Left cardiac atrium (tissue), 4 donors: ENCODE measurements at regions of chr16 and their contacts with region 1.

Region 1: GRCh38 chr16:57519796-57520360 is 16.5 kb downstream of the CCDC102A start:
- DNase-seq: peak; percentile 84
- ATAC-seq: peak; percentile 82 to 84

Region 2: DNA sequence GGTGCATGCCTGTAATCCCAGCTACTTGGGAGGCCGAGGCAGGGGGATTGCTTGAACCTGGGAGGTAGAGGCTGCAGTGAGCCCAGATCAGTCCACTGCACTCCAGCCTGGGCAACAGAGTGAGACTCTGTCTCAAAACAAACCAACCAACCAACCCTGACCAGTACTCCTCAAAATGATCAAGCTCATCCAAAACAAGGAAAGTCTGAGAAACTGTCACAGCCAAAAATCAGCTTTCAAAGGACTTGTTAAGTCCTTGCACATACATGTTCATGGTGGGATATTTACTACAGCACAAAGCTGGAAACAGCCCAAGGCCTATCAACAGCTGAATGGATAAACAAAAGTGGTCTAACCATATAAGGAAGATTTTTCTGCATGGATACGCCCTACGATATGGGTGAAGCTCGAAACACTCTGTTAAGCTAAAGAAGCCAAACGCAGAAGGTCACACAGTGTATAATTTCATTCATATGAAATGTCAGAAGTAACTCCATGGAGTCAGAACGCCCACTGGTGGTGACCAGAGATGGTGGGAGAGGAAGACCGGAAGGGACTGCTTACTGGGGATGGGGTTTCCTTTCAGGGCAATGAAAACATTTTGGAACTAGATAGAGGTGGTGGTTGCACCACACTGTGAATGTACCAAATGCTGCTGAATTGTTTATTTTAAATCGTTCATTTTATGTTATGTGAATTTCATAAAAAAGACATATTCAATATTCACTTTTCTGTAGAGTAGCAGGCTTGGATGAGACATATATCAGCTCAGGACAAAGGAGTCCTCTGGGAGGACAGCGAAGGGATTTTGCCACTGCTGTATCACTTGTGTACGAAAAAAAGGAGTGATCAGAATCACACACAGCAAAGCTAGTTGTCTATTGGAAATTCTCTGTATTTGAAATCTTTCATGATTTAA is 97.6 kb before region 1 on chr16:
- intact Hi-C with region 1: loop called in 1 of 2 experiments (anchors 5 kb)
- DNase-seq: peak; percentile 62
- ATAC-seq: peak; percentile 60 to 78

Region 3: GRCh38 chr16:57469917-57470470 is 49.9 kb before region 1 on chr16:
- intact Hi-C with region 1: loop called in 1 of 2 experiments (anchors 5 kb)
- DNase-seq: no peak
- ATAC-seq: peak in 1 of 2 donors; percentile 7